Endothelial cell of umbilical vein (primary cell): ENCODE measurements at regions of chr3 and their contacts with region 1.

Region 1: GRCh38 chr3:141105828-141106628 is 54.9 kb downstream of the SPSB4 start:
- DNase-seq: peak; percentile 74
- H3K4me3 ChIP-seq: no peak overlapping the region
- H3K27ac ChIP-seq: no peak overlapping the region
- H3K4me1 ChIP-seq: no peaks in the 10 kb centered on the region
- H3K27me3 ChIP-seq: no peaks in the 10 kb centered on the region
- CTCF ChIP-seq: peak; percentile 55 to 62
- POLR2A ChIP-seq: no peak

Region 2: DNA sequence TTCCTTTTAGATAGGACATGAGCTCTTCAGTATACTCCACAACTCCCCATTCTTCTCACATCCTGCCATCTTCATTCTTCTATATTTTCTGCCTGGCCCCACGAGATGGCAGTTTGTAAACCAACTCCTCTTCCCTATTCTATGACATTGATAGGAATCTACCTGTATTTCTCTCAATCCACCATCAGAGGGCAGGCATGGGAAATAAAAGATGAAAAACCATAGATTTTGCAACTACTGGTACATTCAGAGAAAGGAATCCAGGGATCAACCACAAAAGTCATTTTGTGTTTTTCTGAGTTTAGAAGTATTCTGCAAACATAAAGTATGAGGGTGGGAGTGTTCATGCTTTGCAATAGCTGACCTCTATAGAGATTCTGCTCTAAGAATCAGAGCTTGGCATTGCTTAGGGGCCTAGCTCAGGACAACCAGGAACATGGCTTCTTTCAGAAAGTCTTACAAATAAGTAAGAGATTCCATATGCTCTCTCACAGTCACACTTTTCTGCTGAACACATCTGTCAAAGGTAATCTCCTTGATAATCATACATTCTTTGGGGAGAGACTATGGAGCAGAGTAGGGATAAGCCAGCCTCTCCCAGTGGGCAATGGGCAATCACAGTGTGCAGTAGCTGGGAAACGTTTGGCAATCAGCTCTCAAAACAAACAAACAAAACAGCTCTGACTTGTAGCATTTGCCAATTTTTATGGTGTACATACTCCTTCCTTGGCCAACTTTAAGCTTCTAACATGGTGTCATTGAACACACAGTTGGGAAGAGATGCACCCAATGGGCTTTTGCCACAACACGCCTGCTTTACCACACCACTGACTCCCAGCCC is 207.5 kb before region 1 on chr3:
- CTCF ChIA-PET with region 1: interaction called, 12 read pairs
- POLR2A ChIA-PET with region 1: no interaction called
- dilution Hi-C with region 1: no loop called
- intact Hi-C with region 1: loop called (anchors 1 kb)
- DNase-seq: peak; percentile 55
- H3K4me3 ChIP-seq: no peak overlapping the region
- H3K27ac ChIP-seq: no peak overlapping the region
- H3K4me1 ChIP-seq: no peaks in the 10 kb centered on the region
- H3K27me3 ChIP-seq: no peaks in the 10 kb centered on the region
- CTCF ChIP-seq: peak; percentile 16 to 42
- POLR2A ChIP-seq: no peak

Region 3: GRCh38 chr3:140922634-140923033 is 183.4 kb before region 1 on chr3:
- CTCF ChIA-PET with region 1: interaction called, 20 read pairs
- POLR2A ChIA-PET with region 1: no interaction called
- dilution Hi-C with region 1: no loop called
- intact Hi-C with region 1: loop called (anchors 2 kb)
- DNase-seq: peak; percentile 11
- H3K4me3 ChIP-seq: no peak overlapping the region
- H3K27ac ChIP-seq: no peak overlapping the region
- H3K4me1 ChIP-seq: no peaks in the 10 kb centered on the region
- H3K27me3 ChIP-seq: peaks cover 0 to 6% of the 10 kb centered on the region in 2 experiments
- CTCF ChIP-seq: peak in 1 of 2 donors; percentile 24
- POLR2A ChIP-seq: no peak

Region 4: GRCh38 chr3:141000027-141000663 is 105.9 kb before region 1 on chr3:
- CTCF ChIA-PET with region 1: interaction called, 52 read pairs
- POLR2A ChIA-PET with region 1: no interaction called
- dilution Hi-C with region 1: no loop called
- intact Hi-C with region 1: loop called (anchors 1 kb)
- DNase-seq: peak; percentile 51
- H3K4me3 ChIP-seq: no peak overlapping the region
- H3K27ac ChIP-seq: no peak overlapping the region
- H3K4me1 ChIP-seq: no peaks in the 10 kb centered on the region
- H3K27me3 ChIP-seq: peaks cover 0 to 3% of the 10 kb centered on the region in 2 experiments
- CTCF ChIP-seq: peak; percentile 47 to 68
- POLR2A ChIP-seq: no peak

Region 5: DNA sequence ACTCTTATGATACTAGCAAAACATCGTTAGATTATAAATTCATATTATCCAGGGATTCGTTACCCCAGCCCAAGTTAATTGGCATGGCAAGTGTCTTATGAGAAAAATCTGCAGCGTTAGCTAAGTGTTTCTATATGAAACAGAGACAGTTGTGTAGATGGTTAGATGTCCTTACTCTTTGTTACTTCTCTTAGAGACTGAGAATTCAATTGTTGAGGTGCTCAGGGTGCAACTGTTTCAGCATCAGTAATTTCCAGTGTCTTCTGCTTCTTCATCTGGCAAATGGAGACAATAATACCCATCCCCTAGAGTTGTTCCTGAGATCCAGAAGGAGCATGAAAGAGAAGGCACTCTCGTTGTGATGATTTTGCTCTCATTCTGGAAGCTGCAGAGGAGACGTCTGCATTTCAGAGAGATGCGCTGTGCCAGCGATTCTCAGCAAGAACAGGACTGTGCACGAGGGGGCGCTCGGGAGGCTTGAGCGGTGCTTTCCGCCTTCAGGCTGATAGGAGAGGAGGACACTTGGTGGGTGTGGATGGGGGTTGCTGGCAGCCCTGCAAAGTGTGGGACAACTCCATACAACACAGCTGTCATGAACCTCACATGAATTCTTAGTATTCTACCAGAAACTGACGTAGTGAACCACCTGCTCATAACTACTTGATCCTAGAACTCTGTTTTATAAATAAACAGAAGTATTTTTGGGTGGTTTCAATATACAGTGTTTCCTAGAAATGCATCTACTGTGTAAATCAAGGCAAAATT is 94.6 kb before region 1 on chr3:
- CTCF ChIA-PET with region 1: interaction called, 7 read pairs
- POLR2A ChIA-PET with region 1: no interaction called
- dilution Hi-C with region 1: no loop called
- intact Hi-C with region 1: loop called (anchors 1 kb)
- DNase-seq: peak; percentile 59
- H3K4me3 ChIP-seq: no peak overlapping the region
- H3K27ac ChIP-seq: no peak overlapping the region
- H3K4me1 ChIP-seq: no peaks in the 10 kb centered on the region
- H3K27me3 ChIP-seq: peaks cover 4 to 9% of the 10 kb centered on the region in 2 experiments
- CTCF ChIP-seq: peak; percentile 70 to 88
- POLR2A ChIP-seq: no peak

Region 6: GRCh38 chr3:141050576-141051442 is 55.2 kb before region 1 on chr3 and contains the start of gene SPSB4:
- CTCF ChIA-PET with region 1: interaction called, 3 read pairs
- POLR2A ChIA-PET with region 1: no interaction called
- dilution Hi-C with region 1: no loop called
- intact Hi-C with region 1: loop called (anchors 2 kb)
- DNase-seq: peak; percentile 27
- H3K4me3 ChIP-seq: peak within 1 kb of the TSS in 1 of 3 experiments; percentile 10
- H3K27ac ChIP-seq: no peak within 1 kb of the TSS
- H3K4me1 ChIP-seq: no peaks in the 10 kb centered on the region
- H3K27me3 ChIP-seq: peaks cover 26 to 35% of the 10 kb centered on the region in 2 experiments
- CTCF ChIP-seq: peak; percentile 9 to 27
- POLR2A ChIP-seq: no peak
- total RNA-seq, gene SPSB4: 0.14 and 0.22 TPM in 2 replicates

Region 7: DNA sequence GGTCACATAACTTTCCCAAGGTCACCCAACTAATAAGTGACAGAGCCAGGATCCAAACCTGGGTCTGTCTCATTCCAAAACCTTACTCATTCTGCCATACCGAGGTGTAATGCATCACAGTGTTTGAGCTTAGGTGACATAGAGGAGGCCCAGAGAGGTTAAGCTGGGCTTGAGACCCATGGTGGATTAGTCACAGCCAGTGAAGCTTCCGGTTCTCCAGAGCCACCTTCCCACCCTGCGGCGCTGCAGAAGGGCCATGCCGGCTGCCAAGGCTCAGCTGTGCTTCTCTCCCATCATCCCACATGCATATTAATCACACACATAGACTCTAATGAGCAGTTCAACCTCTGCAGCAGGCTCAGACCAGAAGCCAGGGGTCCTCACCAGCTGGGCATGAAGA is 12.6 kb before region 1 on chr3:
- CTCF ChIA-PET with region 1: interaction called, 11 read pairs
- POLR2A ChIA-PET with region 1: no interaction called
- dilution Hi-C with region 1: no loop called
- intact Hi-C with region 1: no loop called
- DNase-seq: no peak
- H3K4me3 ChIP-seq: no peak overlapping the region
- H3K27ac ChIP-seq: no peak overlapping the region
- H3K4me1 ChIP-seq: no peaks in the 10 kb centered on the region
- H3K27me3 ChIP-seq: no peaks in the 10 kb centered on the region
- CTCF ChIP-seq: no peak
- POLR2A ChIP-seq: no peak

Region 8: DNA sequence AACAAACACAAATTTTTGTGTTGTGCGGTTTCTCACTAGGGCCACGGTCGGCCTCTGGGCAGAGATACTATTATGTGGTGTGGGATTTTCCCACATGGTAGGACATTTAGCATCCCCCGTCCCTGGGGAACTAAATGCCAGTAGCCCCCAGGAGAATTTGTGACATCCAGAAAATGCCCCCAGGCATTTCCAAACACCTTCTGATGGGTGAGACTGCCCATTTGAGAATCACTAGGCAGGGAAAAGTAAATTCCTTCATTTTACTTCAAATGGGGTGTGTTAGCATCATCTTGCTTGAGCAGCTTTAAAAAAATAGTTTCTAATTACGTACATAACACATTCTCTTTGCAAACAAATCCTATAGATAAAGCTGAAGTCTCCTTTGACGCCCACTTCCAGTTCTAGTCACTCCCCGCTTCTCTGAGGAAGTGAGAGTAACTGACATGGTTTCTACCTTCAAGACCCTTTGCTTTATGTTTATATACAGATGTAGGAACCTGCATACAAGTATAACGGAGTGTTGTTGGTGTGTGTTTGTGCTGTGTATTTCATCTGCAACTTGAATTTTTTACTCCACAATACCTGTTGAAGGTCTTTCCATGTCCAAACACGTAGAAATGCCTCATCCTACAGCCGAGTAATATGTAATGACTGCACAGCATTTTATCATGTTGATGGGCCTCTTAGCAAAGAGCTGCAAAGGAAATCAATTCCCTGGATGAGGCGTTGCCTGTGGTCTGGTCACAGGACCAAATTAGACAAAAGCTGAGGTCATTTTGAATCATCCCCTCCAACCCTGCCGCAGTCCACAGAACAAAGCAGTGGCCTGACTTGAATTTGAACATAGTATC is 230.9 kb after region 1 on chr3:
- CTCF ChIA-PET with region 1: no interaction called
- POLR2A ChIA-PET with region 1: no interaction called
- dilution Hi-C with region 1: no loop called
- intact Hi-C with region 1: no loop called
- DNase-seq: no peak
- H3K4me3 ChIP-seq: no peak overlapping the region
- H3K27ac ChIP-seq: peak overlapping the region; percentile 61
- H3K4me1 ChIP-seq: peaks cover 26% of the 10 kb centered on the region
- H3K27me3 ChIP-seq: no peaks in the 10 kb centered on the region
- CTCF ChIP-seq: no peak
- POLR2A ChIP-seq: no peak

Region 9: GRCh38 chr3:141686466-141687291 is 580.7 kb after region 1 on chr3:
- CTCF ChIA-PET with region 1: no interaction called
- POLR2A ChIA-PET with region 1: no interaction called
- dilution Hi-C with region 1: no loop called
- intact Hi-C with region 1: no loop called
- DNase-seq: peak; percentile 85
- H3K4me3 ChIP-seq: peak overlapping the region in 2 of 3 experiments; percentile 13 to 17
- H3K27ac ChIP-seq: peak overlapping the region; percentile 4
- H3K4me1 ChIP-seq: peaks cover 17% of the 10 kb centered on the region
- H3K27me3 ChIP-seq: no peaks in the 10 kb centered on the region
- CTCF ChIP-seq: no peak
- POLR2A ChIP-seq: no peak